ENCODE measurements at regions of chr21 and their contacts with region 1.

Region 1: DNA sequence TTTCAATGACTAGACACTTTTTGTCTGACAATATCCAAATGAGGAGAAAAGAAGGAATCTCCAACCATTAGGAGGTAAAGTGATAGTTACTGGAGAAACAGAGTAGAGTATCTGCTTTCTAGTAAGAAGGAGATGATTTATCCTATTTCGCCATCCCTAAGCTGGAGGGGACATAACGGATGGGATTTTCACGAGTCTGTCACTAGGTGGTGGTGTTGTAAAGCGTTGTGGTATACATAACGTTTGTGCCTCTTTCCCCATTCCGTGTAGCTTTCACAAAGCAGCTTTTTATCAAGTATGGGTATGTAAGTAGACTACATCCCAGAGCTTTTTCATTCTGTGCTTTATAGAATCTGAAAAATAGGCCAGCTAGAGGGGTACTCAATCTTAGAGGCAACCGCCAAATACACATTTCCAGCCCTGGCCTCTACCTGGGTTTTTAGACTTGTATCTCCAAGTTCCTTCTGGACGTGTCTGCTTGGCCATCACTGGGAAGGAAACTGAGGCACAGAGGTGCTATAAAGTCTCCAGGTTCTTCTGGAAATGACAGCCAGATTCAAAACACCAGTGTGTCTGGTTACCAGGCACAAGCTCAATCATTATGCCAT is 33.3 kb upstream of the FAM3B start:
- DNase-seq: peak; percentile 45
- H3K4me3 ChIP-seq: no peak overlapping the region
- CTCF ChIP-seq: peak; percentile 74

Region 2: DNA sequence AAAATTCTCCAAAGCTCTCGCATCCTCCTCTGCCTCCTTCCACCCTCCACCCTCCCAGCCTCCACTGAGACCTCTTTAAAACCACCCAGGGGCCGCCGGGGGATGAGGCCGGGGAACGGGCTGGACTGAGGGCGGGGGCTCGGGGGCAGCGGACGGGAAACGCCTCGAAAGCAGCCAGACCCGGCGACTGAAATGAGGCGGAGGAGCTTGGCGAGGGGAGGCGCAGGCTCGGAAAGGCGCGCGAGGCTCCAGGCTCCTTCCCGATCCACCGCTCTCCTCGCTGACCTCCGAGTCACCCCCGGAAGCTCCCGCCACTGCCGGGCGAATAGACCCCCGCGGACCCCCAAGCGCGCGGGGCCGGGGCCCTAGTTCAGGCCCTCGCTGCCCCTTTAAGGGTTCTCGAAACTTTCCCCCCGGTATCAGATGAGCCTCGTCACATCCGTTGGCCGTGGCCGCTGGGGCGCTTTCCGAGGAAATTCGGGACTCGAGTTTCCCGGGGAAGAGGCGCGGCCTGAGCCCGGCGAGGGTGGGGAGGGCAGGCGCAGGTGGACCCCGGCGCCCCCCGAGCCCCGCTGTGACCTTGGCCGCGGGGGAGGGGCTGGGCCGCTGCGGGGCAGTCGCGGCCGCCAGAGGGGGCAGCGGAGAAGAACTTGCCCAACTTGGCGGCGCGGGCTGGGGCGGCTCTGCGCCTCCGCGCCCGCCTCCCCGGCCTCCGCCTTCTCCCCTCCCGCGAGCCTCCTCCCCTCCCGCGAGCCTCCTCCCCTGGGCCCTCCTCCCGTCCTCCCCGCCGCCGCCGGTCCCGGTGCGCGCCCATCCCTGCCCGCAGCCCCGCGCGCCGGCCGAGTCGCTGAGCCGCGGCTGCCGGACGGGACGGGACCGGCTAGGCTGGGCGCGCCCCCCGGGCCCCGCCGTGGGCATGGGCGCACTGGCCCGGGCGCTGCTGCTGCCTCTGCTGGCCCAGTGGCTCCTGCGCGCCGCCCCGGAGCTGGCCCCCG is 115.7 kb before region 1 on chr21 and contains the start of gene BACE2:
- CTCF ChIA-PET with region 1: interaction called, 11 read pairs
- POLR2A ChIA-PET with region 1: no interaction called
- DNase-seq: no peak
- H3K4me3 ChIP-seq: peak within 1 kb of the TSS; percentile 68
- CTCF ChIP-seq: peak; percentile 70

Region 3: DNA sequence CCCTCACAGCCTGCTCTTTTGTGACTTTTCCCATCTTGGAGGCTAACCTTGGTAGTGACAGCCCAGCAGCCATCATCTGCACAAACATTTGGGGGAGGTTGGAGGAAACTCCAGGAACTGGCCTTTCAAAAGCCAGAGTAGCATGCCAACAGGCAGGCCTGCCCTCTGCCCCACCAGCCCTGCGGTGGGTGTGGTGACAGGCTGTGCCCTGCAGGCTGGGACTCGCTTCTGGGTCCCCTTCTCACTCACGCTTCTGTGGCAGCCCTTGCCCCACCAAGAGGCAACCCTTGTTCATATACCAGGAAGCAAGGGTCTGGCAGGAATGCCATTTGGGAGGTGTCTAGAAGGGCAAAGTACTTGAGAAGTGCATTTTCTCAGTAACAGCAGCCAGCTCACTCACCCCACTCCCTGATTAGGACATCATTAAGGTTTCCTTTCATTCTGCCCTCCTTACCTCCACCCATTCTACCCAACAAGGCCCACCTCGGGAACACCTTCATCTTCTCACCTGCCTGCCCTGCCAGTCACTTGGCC is 12.5 kb after region 1 on chr21:
- CTCF ChIA-PET with region 1: interaction called, 21 read pairs
- POLR2A ChIA-PET with region 1: no interaction called
- DNase-seq: no peak
- H3K4me3 ChIP-seq: no peak overlapping the region
- CTCF ChIP-seq: no peak

Region 4: DNA sequence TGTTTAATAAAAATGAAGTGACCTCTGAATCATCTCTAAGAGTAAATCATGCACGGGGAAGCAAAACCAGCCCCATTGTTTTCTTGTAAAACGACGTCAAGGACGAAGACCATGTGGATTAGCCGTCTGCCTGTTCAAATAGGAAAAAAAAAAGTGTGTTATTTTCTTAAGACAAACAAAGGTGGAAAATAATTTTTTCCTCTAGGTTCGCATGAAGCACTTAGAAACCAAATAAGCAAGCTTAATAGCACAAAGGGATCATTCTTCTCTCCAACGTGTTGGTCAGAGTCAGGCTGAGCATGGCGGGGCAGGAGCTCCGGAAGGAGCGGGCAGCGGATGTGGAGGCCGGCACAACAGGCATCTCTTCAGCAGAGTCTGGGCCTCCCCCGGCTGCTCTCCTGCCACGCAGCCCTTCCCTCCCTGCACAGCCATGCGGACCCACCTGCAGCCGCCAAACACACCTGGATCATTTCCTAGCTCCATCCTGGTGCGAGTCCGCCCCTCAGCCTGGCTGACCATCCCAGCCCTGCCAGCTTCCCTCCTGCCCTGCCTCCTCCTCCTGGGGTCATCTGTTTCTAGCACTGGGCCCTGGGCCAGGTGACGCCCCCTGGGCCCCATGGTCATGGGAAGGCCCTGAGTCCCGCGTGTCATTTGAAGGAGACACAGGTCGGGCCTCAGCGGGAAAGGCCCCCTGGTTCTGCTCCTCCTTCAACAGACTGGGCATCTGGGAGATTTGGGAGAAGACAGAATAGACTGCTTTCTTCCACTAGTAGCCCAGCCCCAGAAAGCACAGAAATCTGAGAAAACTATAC is 182.9 kb after region 1 on chr21:
- CTCF ChIA-PET with region 1: interaction called, 27 read pairs
- POLR2A ChIA-PET with region 1: no interaction called
- DNase-seq: no peak
- H3K4me3 ChIP-seq: no peak overlapping the region
- CTCF ChIP-seq: no peak

Region 5: GRCh38 chr21:41612674-41613532 is 329.6 kb after region 1 on chr21:
- CTCF ChIA-PET with region 1: interaction called, 64 read pairs
- POLR2A ChIA-PET with region 1: no interaction called
- DNase-seq: peak; percentile 97
- H3K4me3 ChIP-seq: no peak overlapping the region
- CTCF ChIP-seq: peak; percentile 76

Region 6: DNA sequence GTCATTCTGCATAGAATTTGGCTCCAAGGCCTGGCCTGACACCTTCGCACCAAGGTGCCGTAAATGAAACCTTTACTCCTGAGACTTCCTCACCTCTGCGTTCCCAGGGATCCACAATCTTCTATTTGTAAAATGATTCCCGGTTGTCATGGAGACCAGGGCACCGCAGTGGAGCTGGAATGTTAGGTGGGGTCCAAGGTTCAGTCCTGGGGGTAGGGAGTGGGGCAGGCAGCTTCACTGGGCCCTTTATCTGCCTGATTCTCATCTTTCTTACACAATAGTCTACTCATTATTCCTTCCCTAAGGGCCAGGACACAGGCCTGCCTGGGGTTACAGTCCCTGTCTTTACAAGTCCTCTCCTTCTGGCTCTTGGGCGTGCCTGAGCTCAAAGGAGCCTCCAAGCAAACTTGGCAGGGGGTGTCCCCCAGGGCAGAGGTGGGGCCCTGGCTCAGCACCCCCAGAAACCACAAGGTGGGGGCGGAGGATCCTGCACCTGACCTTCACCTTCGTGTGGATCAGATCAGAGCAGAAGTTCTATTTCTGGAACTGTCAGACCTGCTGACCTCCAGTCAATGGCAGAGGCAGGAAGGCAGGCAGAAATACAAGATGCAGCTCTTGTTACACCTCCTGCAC is 432.4 kb after region 1 on chr21:
- CTCF ChIA-PET with region 1: no interaction called
- POLR2A ChIA-PET with region 1: no interaction called
- DNase-seq: no peak
- H3K4me3 ChIP-seq: no peak overlapping the region
- CTCF ChIP-seq: no peak

Measured in AG04449 (cell line).